T-cell (primary cell): ENCODE measurements at regions of chr11 and their contacts with region 1.

Region 1: GRCh38 chr11:111283945-111284481 is 14.3 kb upstream of the POU2AF3 start:
- DNase-seq: no peak
- ATAC-seq: no peak
- H3K4me3 ChIP-seq: no peak overlapping the region
- H3K4me3 Mint-ChIP-seq: no peak overlapping the region
- H3K27ac ChIP-seq: no peak overlapping the region
- H3K27ac Mint-ChIP-seq: no peak overlapping the region
- H3K4me1 ChIP-seq: no peaks in the 10 kb centered on the region
- H3K4me1 Mint-ChIP-seq: peaks cover 0 to 2% (median 0%) of the 10 kb centered on the region in 3 donors
- H3K27me3 ChIP-seq: peaks cover 0 to 2% of the 10 kb centered on the region in 2 experiments
- H3K27me3 Mint-ChIP-seq: no peaks in the 10 kb centered on the region

Region 2: DNA sequence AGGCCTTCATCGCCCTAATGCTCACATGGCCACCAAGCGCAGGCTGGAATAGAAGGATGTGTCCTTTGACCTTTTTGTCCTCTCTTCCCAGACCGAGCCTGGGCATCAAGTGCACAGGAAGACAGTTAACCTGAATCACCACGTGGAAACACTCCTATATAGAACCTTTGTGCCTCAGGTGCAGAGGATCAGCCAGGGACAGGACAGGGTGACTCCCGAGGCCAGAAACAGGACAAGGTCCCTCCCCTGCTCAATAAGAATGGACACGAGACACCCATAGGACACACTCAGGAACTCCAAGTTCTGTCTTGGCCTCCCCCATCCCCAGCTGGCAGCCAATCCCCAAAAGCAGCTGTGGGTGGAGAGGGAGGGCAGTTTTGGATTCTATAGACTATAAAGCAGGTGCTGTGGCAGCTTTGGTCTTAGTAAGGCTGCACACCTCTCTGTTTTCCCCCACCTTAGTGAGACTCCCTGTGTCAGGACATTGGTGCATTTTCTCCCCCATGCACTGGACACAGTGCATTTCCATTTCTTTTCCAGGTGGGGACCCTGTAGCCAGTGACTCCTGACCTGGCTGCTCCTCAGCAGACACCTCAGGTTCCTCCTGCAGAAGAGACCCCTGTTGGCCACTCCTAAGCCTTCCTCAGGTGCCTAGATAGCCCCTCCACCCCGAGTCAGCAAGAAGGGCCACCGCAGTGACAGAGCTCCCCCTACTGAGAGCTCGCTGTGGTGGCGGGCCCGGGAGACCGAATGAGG is 138.7 kb after region 1 on chr11:
- CTCF ChIA-PET with region 1: interaction called, 14 to 24 read pairs
- POLR2A ChIA-PET with region 1: no interaction called
- DNase-seq: peak in 28 of 35 experiments; percentile 6 to 52 (median 30)
- ATAC-seq: peak in 3 of 4 experiments; percentile 59 to 64 (median 59)
- H3K4me3 ChIP-seq: no peak overlapping the region
- H3K4me3 Mint-ChIP-seq: no peak overlapping the region
- H3K27ac ChIP-seq: no peak overlapping the region
- H3K27ac Mint-ChIP-seq: no peak overlapping the region
- H3K4me1 ChIP-seq: peaks cover 3 to 9% of the 10 kb centered on the region in 2 experiments
- H3K4me1 Mint-ChIP-seq: peaks cover 8 to 14% (median 12%) of the 10 kb centered on the region in 3 donors
- H3K27me3 ChIP-seq: no peaks in the 10 kb centered on the region
- H3K27me3 Mint-ChIP-seq: no peaks in the 10 kb centered on the region

Region 3: GRCh38 chr11:111429066-111429506 is 145.1 kb after region 1 on chr11:
- CTCF ChIA-PET with region 1: interaction called, 14 to 24 read pairs
- POLR2A ChIA-PET with region 1: no interaction called
- DNase-seq: peak in 23 of 35 experiments; percentile 9 to 65 (median 35)
- ATAC-seq: peak in 1 of 4 experiments; percentile 52
- H3K4me3 ChIP-seq: no peak overlapping the region
- H3K4me3 Mint-ChIP-seq: no peak overlapping the region
- H3K27ac ChIP-seq: no peak overlapping the region
- H3K27ac Mint-ChIP-seq: no peak overlapping the region
- H3K4me1 ChIP-seq: no peaks in the 10 kb centered on the region
- H3K4me1 Mint-ChIP-seq: no peaks in the 10 kb centered on the region
- H3K27me3 ChIP-seq: no peaks in the 10 kb centered on the region
- H3K27me3 Mint-ChIP-seq: peaks cover 3 to 5% of the 10 kb centered on the region in 2 donors

Region 4: GRCh38 chr11:111446404-111447111 is 162.5 kb after region 1 on chr11:
- CTCF ChIA-PET with region 1: interaction called, 12 to 21 read pairs
- POLR2A ChIA-PET with region 1: no interaction called
- DNase-seq: peak; percentile 47 to 91 (median 78)
- ATAC-seq: peak; percentile 95 to 99 (median 98)
- H3K4me3 ChIP-seq: no peak overlapping the region
- H3K4me3 Mint-ChIP-seq: peak overlapping the region in 1 of 3 donors; percentile 2
- H3K27ac ChIP-seq: peak overlapping the region; percentile 49
- H3K27ac Mint-ChIP-seq: peak overlapping the region; percentile 47 to 53
- H3K4me1 ChIP-seq: peaks cover 6 to 15% of the 10 kb centered on the region in 2 experiments
- H3K4me1 Mint-ChIP-seq: peaks cover 16 to 19% (median 18%) of the 10 kb centered on the region in 3 donors
- H3K27me3 ChIP-seq: peaks cover 0 to 9% of the 10 kb centered on the region in 2 experiments
- H3K27me3 Mint-ChIP-seq: no peaks in the 10 kb centered on the region